ENCODE measurements at regions of chr5 and their contacts with region 1.

Region 1: DNA sequence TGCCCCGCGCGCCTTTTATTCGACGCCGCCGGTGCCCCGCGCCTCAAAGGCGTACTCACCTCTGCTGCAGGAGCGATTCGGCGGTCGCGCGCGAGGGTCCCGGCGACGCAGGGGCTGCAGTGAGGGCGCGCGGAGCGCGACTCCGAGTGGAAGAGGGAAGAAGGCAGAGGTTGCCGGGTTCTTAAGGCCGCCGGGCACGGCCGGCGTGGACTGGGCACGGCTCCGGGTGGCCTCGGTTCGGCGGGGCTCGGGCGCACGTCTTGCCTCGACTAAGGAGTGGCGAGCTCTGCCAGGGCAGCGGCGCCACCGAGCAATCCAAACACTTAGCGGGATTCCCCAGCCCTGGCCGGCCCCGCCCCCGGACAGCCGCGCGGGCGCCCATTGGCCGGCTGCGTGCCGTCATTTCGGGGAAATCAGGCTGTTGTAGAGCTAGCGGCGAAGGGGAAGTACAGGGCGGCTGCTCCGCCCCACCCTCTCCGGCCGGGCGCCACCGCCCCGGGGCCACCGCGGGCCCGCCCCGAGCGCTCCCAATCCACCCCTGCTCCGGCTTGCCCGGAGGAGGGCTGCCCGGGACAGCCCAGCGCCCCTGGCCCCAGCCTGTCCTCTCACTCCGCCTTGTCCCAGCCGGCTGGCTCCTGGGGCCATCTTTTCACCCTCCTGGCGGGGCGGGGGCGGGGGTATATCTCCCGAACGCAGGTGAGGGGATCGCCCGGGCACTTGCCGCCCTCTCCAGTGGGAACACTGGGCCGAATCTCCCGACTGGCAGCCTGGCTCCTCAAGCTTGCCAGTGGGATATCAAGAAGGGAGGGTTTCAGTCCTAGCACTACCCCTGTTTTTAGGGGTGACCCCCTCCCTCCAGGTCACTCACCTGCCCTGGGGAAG is at the start of gene IRF1:
- DNase-seq: peak; percentile 96 to 99
- H3K4me3 ChIP-seq: peak within 1 kb of the TSS; percentile 73 to 75
- H3K27ac ChIP-seq: peak within 1 kb of the TSS; percentile 87 to 89
- H3K4me1 ChIP-seq: peaks cover 0 to 46% (median 42%) of the 10 kb centered on the region in 4 donors
- H3K27me3 ChIP-seq: no peaks in the 10 kb centered on the region
- CTCF ChIP-seq: no peak

Region 2: DNA sequence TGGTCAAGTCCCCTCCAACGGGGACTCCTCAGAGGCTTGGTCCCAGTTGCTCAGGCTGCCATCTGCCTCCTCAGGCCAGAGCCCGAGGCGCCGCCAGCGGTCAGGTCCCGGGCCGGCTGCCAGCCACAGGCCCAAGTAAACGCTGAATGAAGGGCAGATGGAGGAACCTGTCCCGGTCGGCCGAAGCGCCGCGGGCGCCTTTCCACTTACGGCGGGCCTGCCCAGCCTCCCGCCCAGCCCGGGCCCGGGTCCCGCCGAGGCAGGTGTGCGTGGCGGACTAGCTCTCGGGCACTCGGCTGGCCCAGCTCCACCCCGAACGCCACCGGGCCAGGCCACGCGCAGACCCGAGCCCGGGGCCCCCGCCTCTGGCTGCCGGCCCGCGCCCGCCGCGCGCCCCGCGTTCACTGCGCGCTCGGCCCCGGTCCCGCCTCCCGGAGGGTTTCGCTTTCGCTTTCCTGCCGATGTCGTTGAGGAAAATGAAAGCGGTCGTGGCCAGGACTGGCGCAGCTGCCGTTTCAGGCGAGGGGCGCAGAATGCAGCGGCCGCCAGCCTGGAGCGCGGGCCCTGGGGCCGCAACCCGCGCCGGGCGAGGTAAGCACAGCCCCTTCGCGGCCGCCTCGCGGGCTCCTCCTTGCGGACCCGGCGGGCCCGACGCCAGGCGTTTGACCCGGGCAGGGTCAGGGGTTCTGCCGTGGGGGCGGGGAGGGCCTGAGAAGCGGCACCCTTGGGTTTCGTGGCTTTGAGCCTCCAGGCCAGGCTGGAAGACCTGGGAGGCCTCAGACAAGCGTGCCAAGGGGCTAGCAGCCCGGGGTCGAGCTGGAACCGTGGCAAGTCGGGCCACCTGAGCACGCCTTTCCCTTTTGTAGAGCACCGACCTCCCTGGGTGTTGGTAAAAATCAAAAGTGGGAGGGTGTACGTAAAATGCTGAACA is 80.0 kb before region 1 on chr5:
- intact Hi-C with region 1: loop called (anchors 10 kb)
- DNase-seq: peak; percentile 80 to 93
- H3K4me3 ChIP-seq: peak overlapping the region; percentile 72 to 75
- H3K27ac ChIP-seq: peak overlapping the region; percentile 96 to 98
- H3K4me1 ChIP-seq: peaks cover 0 to 73% (median 27%) of the 10 kb centered on the region in 4 donors
- H3K27me3 ChIP-seq: no peaks in the 10 kb centered on the region
- CTCF ChIP-seq: peak; percentile 38 to 51

Measured in tibial artery (tissue), 4 donors.